ENCODE measurements at regions of chr3 and their contacts with region 1.

Region 1: GRCh38 chr3:48400824-48401433 is 28.9 kb downstream of the FBXW12 start:
- DNase-seq: peak; percentile 73
- ATAC-seq: peak; percentile 87
- H3K4me3 Mint-ChIP-seq: no peak overlapping the region
- H3K27ac Mint-ChIP-seq: no peak overlapping the region
- H3K4me1 Mint-ChIP-seq: no peaks in the 10 kb centered on the region
- H3K27me3 Mint-ChIP-seq: peaks cover 2% of the 10 kb centered on the region
- CTCF ChIP-seq: peak; percentile 90

Region 2: DNA sequence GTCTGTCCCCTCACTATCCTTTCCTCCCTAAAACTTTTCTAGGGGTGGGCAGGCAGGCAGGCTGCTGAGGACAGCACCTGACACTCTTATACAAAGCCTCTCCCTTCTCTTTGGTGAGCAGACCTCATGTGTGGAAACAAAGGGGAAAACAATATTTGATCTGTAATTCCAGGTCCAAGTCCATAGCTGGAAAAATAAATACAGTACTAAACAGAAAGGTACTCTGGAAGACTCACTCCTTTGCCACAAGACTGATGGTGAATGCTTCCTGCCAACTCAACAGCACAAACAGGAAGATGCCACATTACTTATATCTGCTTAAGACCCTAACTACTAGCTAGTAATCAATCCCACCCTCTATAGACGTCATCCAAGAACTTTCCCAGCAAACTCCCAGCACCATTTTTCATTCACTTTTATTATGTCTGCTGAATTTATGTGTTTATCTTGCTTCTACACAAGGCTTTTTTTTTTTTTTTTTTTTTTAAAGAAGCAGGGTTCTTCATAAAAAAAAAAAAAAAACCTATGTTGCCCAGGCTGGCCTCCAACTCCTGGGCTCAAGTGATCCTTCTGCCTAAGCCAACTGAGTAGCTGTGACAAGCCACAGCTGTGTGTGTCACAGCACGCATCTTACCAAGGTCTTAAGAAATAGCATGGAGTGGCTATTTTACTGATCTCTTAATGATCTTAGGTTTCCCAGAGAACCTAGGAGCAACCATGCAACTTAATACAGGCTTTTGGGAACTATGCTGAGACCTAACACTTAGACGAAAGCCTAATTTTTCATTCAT is 778.1 kb before region 1 on chr3:
- CTCF ChIA-PET with region 1: no interaction called
- POLR2A ChIA-PET with region 1: no interaction called
- intact Hi-C with region 1: no loop called
- DNase-seq: no peak
- ATAC-seq: no peak
- H3K4me3 Mint-ChIP-seq: no peak overlapping the region
- H3K27ac Mint-ChIP-seq: peak overlapping the region; percentile 17
- H3K4me1 Mint-ChIP-seq: no peaks in the 10 kb centered on the region
- H3K27me3 Mint-ChIP-seq: no peaks in the 10 kb centered on the region
- CTCF ChIP-seq: no peak

Region 3: DNA sequence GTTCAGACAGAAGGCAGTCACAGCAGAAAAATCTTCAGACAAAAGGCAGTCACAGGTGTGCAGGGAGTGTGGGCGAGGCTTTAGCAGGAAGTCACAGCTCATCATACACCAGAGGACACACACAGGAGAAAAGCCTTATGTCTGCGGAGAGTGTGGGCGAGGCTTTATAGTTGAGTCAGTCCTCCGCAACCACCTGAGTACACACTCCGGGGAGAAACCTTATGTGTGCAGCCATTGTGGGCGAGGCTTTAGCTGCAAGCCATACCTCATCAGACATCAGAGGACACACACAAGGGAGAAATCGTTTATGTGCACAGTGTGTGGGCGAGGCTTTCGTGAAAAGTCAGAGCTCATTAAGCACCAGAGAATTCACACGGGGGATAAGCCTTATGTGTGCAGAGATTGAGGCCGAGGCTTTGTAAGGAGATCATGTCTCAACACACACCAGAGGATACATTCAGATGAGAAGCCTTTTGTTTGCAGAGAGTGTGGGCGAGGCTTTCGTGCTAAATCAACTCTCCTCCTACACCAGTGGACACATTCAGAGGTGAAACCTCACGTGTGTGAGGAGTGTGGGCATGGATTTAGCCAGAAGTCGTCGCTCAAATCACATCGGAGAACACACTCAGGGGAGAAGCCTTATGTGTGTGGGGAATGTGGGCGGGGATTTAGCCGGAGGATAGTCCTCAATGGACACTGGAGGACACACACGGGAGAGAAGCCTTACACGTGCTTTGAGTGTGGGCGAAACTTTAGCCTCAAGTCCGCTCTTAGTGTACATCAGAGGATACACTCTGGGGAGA is 132.3 kb before region 1 on chr3:
- CTCF ChIA-PET with region 1: interaction called, 31 read pairs
- POLR2A ChIA-PET with region 1: interaction called, 3 read pairs
- intact Hi-C with region 1: loop called (anchors 10 kb)
- DNase-seq: peak; percentile 98
- ATAC-seq: peak; percentile 93
- H3K4me3 Mint-ChIP-seq: peak overlapping the region; percentile 61
- H3K27ac Mint-ChIP-seq: peak overlapping the region; percentile 98
- H3K4me1 Mint-ChIP-seq: peaks cover 42% of the 10 kb centered on the region
- H3K27me3 Mint-ChIP-seq: no peaks in the 10 kb centered on the region
- CTCF ChIP-seq: no peak

Region 4: GRCh38 chr3:48285132-48285531 is 115.8 kb before region 1 on chr3:
- CTCF ChIA-PET with region 1: interaction called, 11 read pairs
- POLR2A ChIA-PET with region 1: no interaction called
- intact Hi-C with region 1: no loop called
- DNase-seq: no peak
- ATAC-seq: no peak
- H3K4me3 Mint-ChIP-seq: no peak overlapping the region
- H3K27ac Mint-ChIP-seq: no peak overlapping the region
- H3K4me1 Mint-ChIP-seq: no peaks in the 10 kb centered on the region
- H3K27me3 Mint-ChIP-seq: no peaks in the 10 kb centered on the region
- CTCF ChIP-seq: no peak

Region 5: GRCh38 chr3:48388966-48389365 is 12.0 kb before region 1 on chr3:
- CTCF ChIA-PET with region 1: interaction called, 24 read pairs
- POLR2A ChIA-PET with region 1: no interaction called
- intact Hi-C with region 1: no loop called
- DNase-seq: no peak
- ATAC-seq: no peak
- H3K4me3 Mint-ChIP-seq: no peak overlapping the region
- H3K27ac Mint-ChIP-seq: no peak overlapping the region
- H3K4me1 Mint-ChIP-seq: no peaks in the 10 kb centered on the region
- H3K27me3 Mint-ChIP-seq: peaks cover 11% of the 10 kb centered on the region
- CTCF ChIP-seq: no peak

Region 6: GRCh38 chr3:48446425-48447193 is 45.7 kb after region 1 on chr3 and contains the start of gene ATRIP:
- CTCF ChIA-PET with region 1: interaction called, 15 read pairs
- POLR2A ChIA-PET with region 1: no interaction called
- intact Hi-C with region 1: no loop called
- DNase-seq: peak; percentile 87
- ATAC-seq: peak; percentile 98
- H3K4me3 Mint-ChIP-seq: peak within 1 kb of the TSS; percentile 89
- H3K27ac Mint-ChIP-seq: peak within 1 kb of the TSS; percentile 83
- H3K4me1 Mint-ChIP-seq: peaks cover 40% of the 10 kb centered on the region
- H3K27me3 Mint-ChIP-seq: no peaks in the 10 kb centered on the region
- CTCF ChIP-seq: no peak
- total RNA-seq, gene ATRIP: 12.4 to 15.0 TPM

Region 7: GRCh38 chr3:48524970-48525369 is 124.0 kb after region 1 on chr3:
- CTCF ChIA-PET with region 1: interaction called, 11 read pairs
- POLR2A ChIA-PET with region 1: no interaction called
- intact Hi-C with region 1: no loop called
- DNase-seq: no peak
- ATAC-seq: no peak
- H3K4me3 Mint-ChIP-seq: no peak overlapping the region
- H3K27ac Mint-ChIP-seq: no peak overlapping the region
- H3K4me1 Mint-ChIP-seq: no peaks in the 10 kb centered on the region
- H3K27me3 Mint-ChIP-seq: no peaks in the 10 kb centered on the region
- CTCF ChIP-seq: no peak

Region 8: GRCh38 chr3:48556793-48557626 is 156.1 kb after region 1 on chr3 and contains the start of gene PFKFB4:
- CTCF ChIA-PET with region 1: interaction called, 35 read pairs
- POLR2A ChIA-PET with region 1: no interaction called
- intact Hi-C with region 1: no loop called
- DNase-seq: peak; percentile 100
- ATAC-seq: peak; percentile 89
- H3K4me3 Mint-ChIP-seq: peak within 1 kb of the TSS; percentile 89
- H3K27ac Mint-ChIP-seq: peak within 1 kb of the TSS; percentile 93
- H3K4me1 Mint-ChIP-seq: peaks cover 34% of the 10 kb centered on the region
- H3K27me3 Mint-ChIP-seq: no peaks in the 10 kb centered on the region
- CTCF ChIP-seq: no peak
- total RNA-seq, gene PFKFB4: 90.8 to 94.0 TPM